Activated B cell treated with CpG ODN at 0.5 μM for 24 hours (primary cell): ENCODE measurements at regions of chr13 and their contacts with region 1.

Region 1: GRCh38 chr13:77595166-77595810 is 59.8 kb downstream of the SCEL start:
- DNase-seq: no peak
- ATAC-seq: no peak
- H3K4me3 Mint-ChIP-seq: no peak overlapping the region
- H3K27ac Mint-ChIP-seq: no peak overlapping the region
- H3K4me1 Mint-ChIP-seq: no peaks in the 10 kb centered on the region
- H3K27me3 Mint-ChIP-seq: peaks cover 13% of the 10 kb centered on the region
- CTCF ChIP-seq: no peak

Region 2: GRCh38 chr13:77620138-77620537 is 24.9 kb after region 1 on chr13:
- CTCF ChIA-PET with region 1: no interaction called
- POLR2A ChIA-PET with region 1: no interaction called
- intact Hi-C with region 1: no loop called
- DNase-seq: no peak
- ATAC-seq: no peak
- H3K4me3 Mint-ChIP-seq: no peak overlapping the region
- H3K27ac Mint-ChIP-seq: no peak overlapping the region
- H3K4me1 Mint-ChIP-seq: no peaks in the 10 kb centered on the region
- H3K27me3 Mint-ChIP-seq: peaks cover 16% of the 10 kb centered on the region
- CTCF ChIP-seq: no peak

Region 3: GRCh38 chr13:77724092-77724491 is 128.8 kb after region 1 on chr13:
- CTCF ChIA-PET with region 1: no interaction called
- POLR2A ChIA-PET with region 1: no interaction called
- intact Hi-C with region 1: no loop called
- DNase-seq: no peak
- ATAC-seq: no peak
- H3K4me3 Mint-ChIP-seq: no peak overlapping the region
- H3K27ac Mint-ChIP-seq: no peak overlapping the region
- H3K4me1 Mint-ChIP-seq: peaks cover 17% of the 10 kb centered on the region
- H3K27me3 Mint-ChIP-seq: no peaks in the 10 kb centered on the region
- CTCF ChIP-seq: no peak

Region 4: DNA sequence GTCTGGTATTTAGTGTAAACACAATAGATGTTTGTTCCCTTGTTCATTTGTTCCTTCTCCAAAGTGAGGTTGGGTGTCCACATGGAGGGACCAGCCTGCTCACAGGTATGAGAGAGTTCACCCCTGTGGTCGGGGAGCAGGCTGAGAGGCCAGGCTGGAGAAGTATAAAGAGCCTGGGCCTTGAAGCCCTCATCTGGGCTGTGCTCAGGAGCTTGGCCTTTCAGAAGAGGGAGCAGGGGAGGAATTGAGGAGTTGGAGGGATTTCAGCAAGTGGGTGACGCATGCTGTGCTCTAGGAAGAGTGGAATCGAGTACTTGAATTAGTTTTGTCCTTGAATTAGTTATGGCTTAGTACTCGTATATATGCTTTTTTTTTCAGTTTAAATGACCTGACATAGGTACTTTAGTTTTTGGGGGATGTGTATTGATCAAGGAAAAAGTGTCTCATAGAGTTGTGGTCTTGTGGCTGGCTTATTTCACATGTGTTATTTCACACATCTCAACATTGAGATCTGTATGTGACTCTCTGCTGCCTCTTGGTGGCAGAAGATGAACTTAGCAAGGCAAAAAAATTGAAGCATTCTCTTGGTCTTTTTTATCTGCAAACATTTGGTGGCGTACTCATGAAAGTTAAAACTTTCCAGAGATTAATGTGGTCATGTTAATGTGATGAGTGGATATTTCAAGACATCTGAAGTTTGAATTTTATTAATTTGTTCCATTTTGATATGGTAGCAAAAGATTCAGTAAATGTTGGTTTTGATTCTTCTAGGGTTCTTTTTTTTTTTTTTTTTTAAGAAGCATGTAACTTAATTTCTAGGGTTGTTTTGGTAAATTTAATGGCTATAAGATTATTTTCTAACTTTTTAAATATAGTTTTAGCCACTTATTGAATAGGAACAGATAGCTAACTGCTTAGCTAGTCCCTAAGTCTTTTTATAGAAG is 156.5 kb after region 1 on chr13:
- CTCF ChIA-PET with region 1: interaction called, 30 read pairs
- POLR2A ChIA-PET with region 1: no interaction called
- intact Hi-C with region 1: loop called (anchors 1 kb)
- DNase-seq: no peak
- ATAC-seq: peak; percentile 69
- H3K4me3 Mint-ChIP-seq: no peak overlapping the region
- H3K27ac Mint-ChIP-seq: no peak overlapping the region
- H3K4me1 Mint-ChIP-seq: no peaks in the 10 kb centered on the region
- H3K27me3 Mint-ChIP-seq: no peaks in the 10 kb centered on the region
- CTCF ChIP-seq: peak; percentile 91